CD8-positive, alpha-beta T cell (primary cell): ENCODE measurements at regions of chr13 and their contacts with region 1.

Region 1: DNA sequence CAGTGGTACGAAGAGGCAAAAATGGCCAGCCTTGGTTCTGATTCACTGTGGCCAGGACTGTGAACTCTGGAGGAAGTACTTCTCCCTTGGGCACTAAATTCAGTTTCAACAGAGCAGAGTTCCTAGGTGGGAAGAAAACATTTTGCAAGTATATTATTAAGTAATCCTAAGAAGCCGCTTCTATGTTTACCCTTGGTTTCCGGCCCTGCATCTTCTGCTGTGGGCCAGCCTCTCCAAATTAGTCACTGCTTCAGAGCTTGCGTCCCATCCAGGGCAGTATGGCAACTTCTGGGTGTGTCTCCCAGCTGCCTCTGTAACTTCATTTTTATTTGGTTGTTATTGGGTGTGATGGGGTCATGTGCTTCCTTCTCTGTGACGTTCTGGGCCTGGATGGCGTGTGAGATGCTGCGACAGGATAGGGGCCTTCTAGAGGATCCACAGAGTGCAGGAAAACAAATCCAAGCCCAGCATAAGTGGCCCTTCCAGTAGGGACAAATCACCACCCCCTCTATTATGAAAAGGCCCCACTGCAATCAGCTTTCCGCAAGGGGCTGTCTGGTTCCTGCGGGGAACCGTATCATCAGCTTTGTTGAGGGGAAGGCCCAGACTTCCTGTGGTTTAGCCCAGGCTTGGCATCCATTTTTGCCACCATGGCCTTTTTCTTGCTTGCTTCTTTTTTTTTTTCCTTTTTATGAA is 55.1 kb upstream of the C1QTNF9 start:
- DNase-seq: peak in 8 of 9 experiments; percentile 44 to 91 (median 69)
- ATAC-seq: peak; percentile 58
- H3K4me3 ChIP-seq: peak overlapping the region; percentile 73 to 94
- H3K4me3 Mint-ChIP-seq: peak overlapping the region; percentile 91
- H3K27ac ChIP-seq: peak overlapping the region; percentile 77 to 84
- H3K27ac Mint-ChIP-seq: peak overlapping the region; percentile 98
- H3K4me1 ChIP-seq: peaks cover 85% of the 10 kb centered on the region
- H3K4me1 Mint-ChIP-seq: peaks cover 94% of the 10 kb centered on the region
- H3K27me3 ChIP-seq: no peaks in the 10 kb centered on the region
- H3K27me3 Mint-ChIP-seq: no peaks in the 10 kb centered on the region
- CTCF ChIP-seq: no peak

Region 2: GRCh38 chr13:24264976-24265375 is 10.7 kb after region 1 on chr13:
- CTCF ChIA-PET with region 1: interaction called, 49 read pairs
- POLR2A ChIA-PET with region 1: interaction called, 224 read pairs
- intact Hi-C with region 1: loop called in 1 of 2 experiments (anchors 1 kb)
- DNase-seq: peak; percentile 62 to 92 (median 85)
- ATAC-seq: peak; percentile 88
- H3K4me3 ChIP-seq: peak overlapping the region; percentile 2 to 23
- H3K4me3 Mint-ChIP-seq: peak overlapping the region; percentile 77
- H3K27ac ChIP-seq: peak overlapping the region; percentile 44 to 91
- H3K27ac Mint-ChIP-seq: peak overlapping the region; percentile 99
- H3K4me1 ChIP-seq: peaks cover 97% of the 10 kb centered on the region
- H3K4me1 Mint-ChIP-seq: peaks cover 95% of the 10 kb centered on the region
- H3K27me3 ChIP-seq: no peaks in the 10 kb centered on the region
- H3K27me3 Mint-ChIP-seq: no peaks in the 10 kb centered on the region
- CTCF ChIP-seq: no peak

Region 3: DNA sequence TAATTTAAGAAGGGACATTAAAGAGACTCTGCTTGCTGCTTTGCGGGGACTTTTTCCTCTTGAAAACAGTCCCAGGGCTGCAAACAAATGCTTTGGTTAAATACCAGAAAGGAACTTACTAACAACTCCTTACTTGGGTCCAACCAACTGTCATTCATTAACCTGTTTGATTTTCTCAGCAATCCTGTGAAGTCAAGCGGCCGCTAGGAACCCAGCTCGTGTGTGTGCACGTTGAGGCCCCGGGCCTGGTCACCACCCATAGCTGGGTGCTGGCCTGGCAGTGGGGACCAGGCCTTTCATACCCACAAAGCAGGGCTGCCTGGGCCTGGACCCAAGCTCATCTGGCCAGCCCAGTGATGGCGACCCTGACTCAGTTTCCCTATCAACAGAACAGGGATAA is 105.8 kb after region 1 on chr13:
- CTCF ChIA-PET with region 1: no interaction called
- POLR2A ChIA-PET with region 1: no interaction called
- intact Hi-C with region 1: no loop called
- DNase-seq: no peak
- ATAC-seq: no peak
- H3K4me3 ChIP-seq: no peak overlapping the region
- H3K4me3 Mint-ChIP-seq: no peak overlapping the region
- H3K27ac ChIP-seq: no peak overlapping the region
- H3K27ac Mint-ChIP-seq: no peak overlapping the region
- H3K4me1 ChIP-seq: no peaks in the 10 kb centered on the region
- H3K4me1 Mint-ChIP-seq: no peaks in the 10 kb centered on the region
- H3K27me3 ChIP-seq: no peaks in the 10 kb centered on the region
- H3K27me3 Mint-ChIP-seq: no peaks in the 10 kb centered on the region
- CTCF ChIP-seq: no peak

Region 4: GRCh38 chr13:24512197-24512907 is 258.1 kb after region 1 on chr13 and contains the start of gene PARP4:
- CTCF ChIA-PET with region 1: no interaction called
- POLR2A ChIA-PET with region 1: no interaction called
- intact Hi-C with region 1: loop called in 1 of 2 experiments (anchors 10 kb)
- DNase-seq: peak in 8 of 9 experiments; percentile 53 to 84 (median 66)
- ATAC-seq: peak; percentile 71
- H3K4me3 ChIP-seq: peak within 1 kb of the TSS; percentile 70 to 98
- H3K4me3 Mint-ChIP-seq: peak within 1 kb of the TSS; percentile 87
- H3K27ac ChIP-seq: peak within 1 kb of the TSS; percentile 66 to 83
- H3K27ac Mint-ChIP-seq: peak within 1 kb of the TSS; percentile 92
- H3K4me1 ChIP-seq: peaks cover 12% of the 10 kb centered on the region
- H3K4me1 Mint-ChIP-seq: peaks cover 31% of the 10 kb centered on the region
- H3K27me3 ChIP-seq: no peaks in the 10 kb centered on the region
- H3K27me3 Mint-ChIP-seq: no peaks in the 10 kb centered on the region
- CTCF ChIP-seq: no peak
- total RNA-seq, gene PARP4: 20.1 to 21.8 TPM

Region 5: DNA sequence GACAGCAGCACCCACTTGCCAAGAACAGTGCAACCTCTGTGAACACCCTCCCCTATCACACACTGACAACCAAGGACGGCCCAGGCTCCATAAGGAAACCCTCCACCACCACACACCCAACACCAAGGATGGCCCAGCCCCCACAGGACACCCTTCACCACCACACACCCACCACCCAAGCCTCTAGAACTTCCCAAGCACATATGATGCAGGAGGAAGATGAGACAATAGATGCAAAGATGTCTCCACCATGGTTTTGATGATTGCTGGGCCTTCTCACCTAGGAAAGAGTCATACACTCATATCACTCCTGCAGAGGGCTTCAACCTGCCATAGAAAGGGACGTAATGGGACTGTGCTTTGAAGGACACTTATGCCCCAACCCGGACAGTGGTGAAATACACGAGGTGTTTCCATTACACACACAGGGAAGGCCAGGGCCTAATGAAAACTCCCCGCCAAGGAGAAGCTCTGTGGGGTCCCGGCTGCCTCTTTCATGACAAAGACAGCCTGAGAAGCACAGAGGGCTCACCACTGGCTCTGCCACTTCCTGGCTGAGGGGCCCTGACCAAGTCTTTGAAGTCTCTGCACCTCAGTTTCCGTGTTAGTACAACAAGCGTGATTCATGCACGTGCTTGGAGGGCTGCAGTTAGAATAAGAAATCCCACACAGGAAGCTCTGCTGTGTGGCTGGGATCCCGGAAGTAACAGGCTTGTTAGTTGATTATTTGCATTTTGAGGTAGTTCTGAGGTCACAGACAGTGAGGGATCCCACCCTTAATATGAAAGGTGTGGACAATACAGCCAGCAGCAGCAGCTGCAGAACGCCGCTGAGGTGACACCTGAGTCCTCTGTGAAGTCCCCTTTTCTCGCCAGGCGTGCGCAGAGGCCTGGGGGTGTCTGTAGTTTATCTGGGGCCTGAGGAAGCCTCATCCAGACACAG is 364.0 kb after region 1 on chr13:
- CTCF ChIA-PET with region 1: no interaction called
- POLR2A ChIA-PET with region 1: no interaction called
- intact Hi-C with region 1: loop called in 1 of 2 experiments (anchors 10 kb)
- DNase-seq: peak; percentile 26 to 95 (median 72)
- ATAC-seq: peak; percentile 84
- H3K4me3 ChIP-seq: no peak overlapping the region
- H3K4me3 Mint-ChIP-seq: peak overlapping the region; percentile 4
- H3K27ac ChIP-seq: peak overlapping the region; percentile 54 to 77
- H3K27ac Mint-ChIP-seq: peak overlapping the region; percentile 91
- H3K4me1 ChIP-seq: peaks cover 28% of the 10 kb centered on the region
- H3K4me1 Mint-ChIP-seq: peaks cover 36% of the 10 kb centered on the region
- H3K27me3 ChIP-seq: no peaks in the 10 kb centered on the region
- H3K27me3 Mint-ChIP-seq: no peaks in the 10 kb centered on the region
- CTCF ChIP-seq: no peak